ENCODE measurements at regions of chr11 and their contacts with region 1.

Region 1: GRCh38 chr11:86041975-86042378 is 26.9 kb downstream of the PICALM start:
- DNase-seq: peak in 4 of 5 donors; percentile 37 to 71 (median 65)
- H3K4me3 ChIP-seq: no peak overlapping the region
- H3K4me3 Mint-ChIP-seq: peak overlapping the region in 3 of 7 donors; percentile 0 to 15 (median 1)
- H3K27ac ChIP-seq: no peak overlapping the region
- H3K27ac Mint-ChIP-seq: peak overlapping the region; percentile 19 to 83 (median 54)
- H3K4me1 ChIP-seq: peaks cover 52% of the 10 kb centered on the region
- H3K4me1 Mint-ChIP-seq: peaks cover 65 to 81% (median 81%) of the 10 kb centered on the region in 3 donors
- H3K27me3 ChIP-seq: no peaks in the 10 kb centered on the region
- H3K27me3 Mint-ChIP-seq: no peaks in the 10 kb centered on the region

Region 2: GRCh38 chr11:86068951-86069407 is 27.0 kb after region 1 on chr11 and contains the start of gene PICALM:
- CTCF ChIA-PET with region 1: interaction called, 13 read pairs
- POLR2A ChIA-PET with region 1: interaction called, 5 read pairs
- DNase-seq: peak; percentile 94 to 97 (median 96)
- H3K4me3 ChIP-seq: peak within 1 kb of the TSS; percentile 85
- H3K4me3 Mint-ChIP-seq: peak within 1 kb of the TSS; percentile 92 to 100 (median 99)
- H3K27ac ChIP-seq: peak within 1 kb of the TSS; percentile 82
- H3K27ac Mint-ChIP-seq: peak within 1 kb of the TSS; percentile 91 to 99 (median 96)
- H3K4me1 ChIP-seq: peaks cover 17% of the 10 kb centered on the region
- H3K4me1 Mint-ChIP-seq: peaks cover 23 to 36% (median 32%) of the 10 kb centered on the region in 3 donors
- H3K27me3 ChIP-seq: no peaks in the 10 kb centered on the region
- H3K27me3 Mint-ChIP-seq: peaks cover 1 to 4% of the 10 kb centered on the region in 2 donors
- total RNA-seq, gene PICALM: 95.2 to 103 TPM

Region 3: DNA sequence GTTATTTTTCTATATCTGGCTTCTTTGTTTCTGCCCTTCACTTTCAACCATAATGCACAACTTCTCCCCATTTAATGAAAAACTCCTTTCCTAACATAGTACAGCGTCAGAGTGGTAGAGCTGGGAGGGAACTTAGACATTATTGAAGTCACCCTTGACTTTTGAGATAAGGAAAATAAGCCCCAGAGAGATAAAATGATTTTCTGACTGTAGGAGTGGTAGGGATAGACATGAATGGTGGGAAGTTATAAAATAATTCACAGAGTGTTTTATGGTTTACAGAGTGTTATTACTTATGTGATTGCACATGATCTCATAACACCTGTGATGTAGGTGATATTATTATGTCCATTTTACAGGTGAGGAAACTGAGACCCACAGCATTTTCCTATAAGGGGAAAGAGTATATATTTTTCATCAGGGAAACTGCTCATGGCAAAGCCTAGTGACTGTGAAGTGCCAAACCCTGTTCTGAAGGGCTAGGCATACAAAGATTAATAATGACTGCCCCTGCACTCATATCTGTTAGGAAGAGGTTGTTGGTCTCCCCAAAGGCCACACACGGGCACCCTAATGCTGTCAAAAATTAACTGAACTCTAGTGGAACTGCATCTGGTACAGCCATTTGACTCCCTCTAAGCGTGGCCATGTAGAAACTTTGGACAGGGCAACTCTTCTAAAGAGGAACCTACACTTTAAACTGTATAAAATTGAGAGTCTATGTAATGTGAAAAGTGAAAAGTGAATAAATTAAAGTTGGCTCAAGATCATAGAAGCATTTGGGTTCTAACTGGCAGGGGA is 88.0 kb after region 1 on chr11:
- CTCF ChIA-PET with region 1: no interaction called
- POLR2A ChIA-PET with region 1: no interaction called
- DNase-seq: no peak
- H3K4me3 ChIP-seq: no peak overlapping the region
- H3K4me3 Mint-ChIP-seq: no peak overlapping the region
- H3K27ac ChIP-seq: no peak overlapping the region
- H3K27ac Mint-ChIP-seq: no peak overlapping the region
- H3K4me1 ChIP-seq: no peaks in the 10 kb centered on the region
- H3K4me1 Mint-ChIP-seq: peaks cover 0 to under 1% (median 0%) of the 10 kb centered on the region in 3 donors
- H3K27me3 ChIP-seq: no peaks in the 10 kb centered on the region
- H3K27me3 Mint-ChIP-seq: peaks cover 0 to 1% of the 10 kb centered on the region in 2 donors

Region 4: DNA sequence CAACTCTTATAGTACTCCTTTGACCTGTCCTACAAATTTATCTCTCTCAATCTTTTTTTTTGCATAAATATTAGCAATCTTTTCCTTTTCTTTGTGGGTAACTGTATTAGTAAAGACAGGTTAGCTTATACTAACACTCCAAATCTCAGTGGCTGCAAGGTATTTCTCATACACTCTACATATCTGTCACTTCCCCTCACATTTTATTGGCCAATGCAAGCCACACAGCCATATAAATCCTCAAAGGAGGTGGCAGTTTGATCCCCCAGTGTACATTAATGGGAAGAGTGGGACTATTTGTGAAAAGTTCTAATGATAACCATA is 160.0 kb after region 1 on chr11:
- CTCF ChIA-PET with region 1: interaction called, 15 read pairs
- POLR2A ChIA-PET with region 1: no interaction called
- DNase-seq: no peak
- H3K4me3 ChIP-seq: peak overlapping the region; percentile 79
- H3K4me3 Mint-ChIP-seq: no peak overlapping the region
- H3K27ac ChIP-seq: peak overlapping the region; percentile 64
- H3K27ac Mint-ChIP-seq: no peak overlapping the region
- H3K4me1 ChIP-seq: peaks cover 16% of the 10 kb centered on the region
- H3K4me1 Mint-ChIP-seq: no peaks in the 10 kb centered on the region
- H3K27me3 ChIP-seq: no peaks in the 10 kb centered on the region
- H3K27me3 Mint-ChIP-seq: no peaks in the 10 kb centered on the region

Region 5: GRCh38 chr11:86218125-86219084 is 176.4 kb after region 1 on chr11:
- CTCF ChIA-PET with region 1: interaction called, 14 read pairs
- POLR2A ChIA-PET with region 1: no interaction called
- DNase-seq: peak; percentile 39 to 68 (median 46)
- H3K4me3 ChIP-seq: peak overlapping the region; percentile 43
- H3K4me3 Mint-ChIP-seq: peak overlapping the region; percentile 10 to 80 (median 76)
- H3K27ac ChIP-seq: no peak overlapping the region
- H3K27ac Mint-ChIP-seq: peak overlapping the region in 4 of 8 donors; percentile 1 to 38 (median 14)
- H3K4me1 ChIP-seq: peaks cover 9% of the 10 kb centered on the region
- H3K4me1 Mint-ChIP-seq: peaks cover 9 to 20% (median 11%) of the 10 kb centered on the region in 3 donors
- H3K27me3 ChIP-seq: no peaks in the 10 kb centered on the region
- H3K27me3 Mint-ChIP-seq: peaks cover 5 to 32% of the 10 kb centered on the region in 2 donors

Measured in CD8-positive, alpha-beta memory T cell (primary cell).